HEK293 (cell line): ENCODE measurements at regions of chr9 and their contacts with region 1.

Region 1: GRCh38 chr9:935344-935965 is 41.0 kb upstream of the DMRT3 start:
- H3K4me3 ChIP-seq: peak overlapping the region; percentile 12
- H3K27ac ChIP-seq: no peak overlapping the region
- H3K4me1 ChIP-seq: no peaks in the 10 kb centered on the region; the same call in 1 of the 2 replicates
- CTCF ChIP-seq: no peak

Region 2: GRCh38 chr9:899440-900184 is 35.8 kb before region 1 on chr9:
- CTCF ChIA-PET with region 1: interaction called, 10 read pairs
- POLR2A ChIA-PET with region 1: no interaction called
- H3K4me3 ChIP-seq: no peak overlapping the region
- H3K27ac ChIP-seq: peak overlapping the region; percentile 77
- H3K4me1 ChIP-seq: peaks cover 14% of the 10 kb centered on the region
- CTCF ChIP-seq: no peak

Region 3: GRCh38 chr9:911003-911402 is 24.5 kb before region 1 on chr9:
- CTCF ChIA-PET with region 1: no interaction called
- POLR2A ChIA-PET with region 1: no interaction called
- H3K4me3 ChIP-seq: no peak overlapping the region
- H3K27ac ChIP-seq: no peak overlapping the region
- H3K4me1 ChIP-seq: no peaks in the 10 kb centered on the region
- CTCF ChIP-seq: no peak